ENCODE measurements at regions of chr20 and their contacts with region 1.

Region 1: GRCh38 chr20:2172305-2173175 is 70.9 kb downstream of the STK35 start:
- DNase-seq: peak; percentile 85
- ATAC-seq: peak; percentile 88

Region 2: DNA sequence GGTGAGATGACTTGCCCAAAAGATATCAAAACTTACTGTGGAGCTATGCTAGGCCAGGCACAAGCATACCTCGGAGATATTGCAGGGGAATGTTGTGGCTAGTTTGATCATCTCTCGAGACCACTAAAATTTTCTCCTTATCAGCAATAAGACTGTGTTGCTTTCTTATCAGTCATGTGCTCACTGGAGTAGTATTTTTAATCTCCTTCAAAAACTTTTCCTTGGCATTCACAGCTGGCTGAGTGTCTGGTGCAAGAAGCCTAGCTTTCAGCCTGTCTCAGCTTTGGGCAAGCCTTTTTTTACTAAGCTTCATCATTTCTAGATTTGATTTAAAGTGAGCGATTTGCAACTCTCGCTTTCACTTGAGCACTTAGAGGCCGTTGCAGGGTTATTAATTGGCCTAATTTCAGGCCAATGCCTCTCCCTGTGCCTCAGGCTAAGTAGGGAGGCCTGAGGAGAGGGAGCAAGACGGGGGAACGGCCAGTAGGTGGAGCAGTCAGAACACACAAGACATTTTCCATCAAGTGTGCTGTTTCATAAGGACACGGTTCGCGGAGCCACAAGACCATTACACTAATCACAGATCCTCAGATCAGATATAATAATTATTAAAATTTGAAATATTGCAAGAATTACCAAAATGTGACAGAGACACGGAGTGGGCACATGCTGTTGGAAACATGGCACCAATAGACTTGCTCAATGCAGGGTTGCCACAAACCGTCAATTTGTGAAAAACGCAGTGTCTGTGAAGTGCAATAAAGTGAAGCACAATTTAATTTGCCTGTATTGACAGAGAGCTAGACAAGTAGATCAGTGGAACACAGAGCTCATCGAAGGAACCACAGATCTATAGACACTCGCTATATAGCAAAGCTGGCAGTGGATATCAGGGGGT is 408.2 kb before region 1 on chr20:
- intact Hi-C with region 1: loop called (anchors 10 kb)
- DNase-seq: peak; percentile 89
- ATAC-seq: peak; percentile 96

Region 3: GRCh38 chr20:1965520-1966351 is 206.8 kb before region 1 on chr20:
- intact Hi-C with region 1: loop called (anchors 10 kb)
- DNase-seq: peak; percentile 87
- ATAC-seq: peak; percentile 87

Region 4: GRCh38 chr20:2387180-2387577 is 214.6 kb after region 1 on chr20:
- intact Hi-C with region 1: no loop called
- DNase-seq: no peak
- ATAC-seq: no peak

Measured in sciatic nerve (tissue), 2 donors.